Caco-2 (cell line): ENCODE measurements at regions of chr2 and their contacts with region 1.

Region 1: GRCh38 chr2:150487537-150488429 is at the start of gene RND3:
- DNase-seq: peak; percentile 97 to 98
- H3K4me3 ChIP-seq: peak within 1 kb of the TSS; percentile 81
- H3K4me3 Mint-ChIP-seq: peak within 1 kb of the TSS; percentile 99
- H3K27ac Mint-ChIP-seq: peak within 1 kb of the TSS; percentile 93
- H3K4me1 ChIP-seq: peaks cover 22% of the 10 kb centered on the region
- H3K4me1 Mint-ChIP-seq: peaks cover 12% of the 10 kb centered on the region
- H3K27me3 ChIP-seq: no peaks in the 10 kb centered on the region
- H3K27me3 Mint-ChIP-seq: no peaks in the 10 kb centered on the region
- CTCF ChIP-seq: peak; percentile 83 to 85
- total RNA-seq, gene RND3: 70.9 and 75.0 TPM in 2 replicates

Region 2: GRCh38 chr2:149733936-149734685 is 753.7 kb before region 1 on chr2:
- CTCF ChIA-PET with region 1: no interaction called
- POLR2A ChIA-PET with region 1: no interaction called
- intact Hi-C with region 1: loop called (anchors 5 kb)
- DNase-seq: peak; percentile 75 to 78
- H3K4me3 ChIP-seq: no peak overlapping the region
- H3K4me3 Mint-ChIP-seq: no peak overlapping the region
- H3K27ac Mint-ChIP-seq: peak overlapping the region; percentile 25
- H3K4me1 ChIP-seq: peaks cover 36% of the 10 kb centered on the region
- H3K4me1 Mint-ChIP-seq: peaks cover 13% of the 10 kb centered on the region
- H3K27me3 ChIP-seq: no peaks in the 10 kb centered on the region
- H3K27me3 Mint-ChIP-seq: no peaks in the 10 kb centered on the region
- CTCF ChIP-seq: no peak

Region 3: DNA sequence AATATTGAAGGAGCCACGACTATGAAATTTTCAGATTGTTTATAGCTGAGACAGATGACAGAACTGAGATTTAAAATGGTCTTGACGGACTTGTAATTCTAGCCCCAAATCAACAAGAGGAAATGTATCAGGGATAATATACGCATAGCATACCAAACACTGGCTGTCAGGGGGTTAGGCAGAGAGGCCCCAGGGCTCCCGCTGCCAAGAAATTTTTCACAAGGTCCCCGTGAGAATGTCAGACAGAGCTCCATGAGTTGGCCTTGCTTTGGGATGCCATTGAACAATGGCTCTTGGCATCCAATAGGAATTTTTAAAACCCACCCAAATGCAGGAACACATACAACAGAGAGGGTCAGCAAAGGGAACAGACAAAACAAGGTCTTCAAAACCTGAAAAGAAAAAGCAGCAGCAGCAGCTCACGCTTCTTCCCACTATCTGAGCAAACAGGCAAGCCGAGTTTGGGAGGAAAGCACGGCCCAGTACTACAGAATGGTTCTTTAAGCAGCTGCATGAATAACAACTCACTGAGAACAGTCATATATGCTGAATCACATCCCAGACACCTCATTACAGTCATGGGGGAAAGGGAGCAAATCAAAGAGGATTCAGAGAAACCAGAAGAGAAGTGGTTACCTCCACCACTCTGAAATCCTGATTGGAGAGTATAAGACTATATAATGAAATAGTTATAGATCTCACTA is 445.9 kb before region 1 on chr2:
- CTCF ChIA-PET with region 1: no interaction called
- POLR2A ChIA-PET with region 1: no interaction called
- intact Hi-C with region 1: loop called (anchors 1 kb)
- DNase-seq: no peak
- H3K4me3 ChIP-seq: no peak overlapping the region
- H3K4me3 Mint-ChIP-seq: no peak overlapping the region
- H3K27ac Mint-ChIP-seq: no peak overlapping the region
- H3K4me1 ChIP-seq: peaks cover 27% of the 10 kb centered on the region
- H3K4me1 Mint-ChIP-seq: peaks cover 35% of the 10 kb centered on the region
- H3K27me3 ChIP-seq: no peaks in the 10 kb centered on the region
- H3K27me3 Mint-ChIP-seq: no peaks in the 10 kb centered on the region
- CTCF ChIP-seq: no peak

Region 4: DNA sequence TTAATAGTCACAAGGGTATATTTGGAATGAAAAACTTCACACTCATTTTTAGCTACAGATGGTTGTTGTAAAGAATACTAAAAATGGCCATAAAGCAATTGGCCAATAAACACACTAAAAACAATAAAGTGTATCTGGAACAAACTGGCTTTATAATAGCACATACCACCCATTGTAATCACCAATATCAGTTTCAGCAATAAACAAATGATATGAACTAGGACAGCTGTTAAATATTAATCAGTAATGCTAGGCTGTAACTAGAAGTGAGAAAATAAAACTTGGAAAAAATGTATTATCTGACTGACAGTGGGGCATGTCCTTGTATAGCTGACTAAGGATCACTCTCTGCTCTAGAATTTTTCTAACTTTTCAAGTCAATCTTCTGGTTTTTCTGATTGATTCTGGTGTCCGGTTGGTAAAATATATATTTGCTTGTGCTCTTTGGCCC is 312.8 kb before region 1 on chr2:
- CTCF ChIA-PET with region 1: no interaction called
- POLR2A ChIA-PET with region 1: no interaction called
- intact Hi-C with region 1: loop called (anchors 5 kb)
- DNase-seq: no peak
- H3K4me3 ChIP-seq: no peak overlapping the region
- H3K4me3 Mint-ChIP-seq: no peak overlapping the region
- H3K27ac Mint-ChIP-seq: no peak overlapping the region
- H3K4me1 ChIP-seq: peaks cover 22% of the 10 kb centered on the region
- H3K4me1 Mint-ChIP-seq: peaks cover 26% of the 10 kb centered on the region
- H3K27me3 ChIP-seq: no peaks in the 10 kb centered on the region
- H3K27me3 Mint-ChIP-seq: no peaks in the 10 kb centered on the region
- CTCF ChIP-seq: no peak

Region 5: GRCh38 chr2:150371044-150371812 is 116.6 kb before region 1 on chr2:
- CTCF ChIA-PET with region 1: interaction called, 3 read pairs
- POLR2A ChIA-PET with region 1: no interaction called
- intact Hi-C with region 1: loop called (anchors 2 kb)
- DNase-seq: peak; percentile 80 to 90
- H3K4me3 ChIP-seq: no peak overlapping the region
- H3K4me3 Mint-ChIP-seq: peak overlapping the region; percentile 19
- H3K27ac Mint-ChIP-seq: peak overlapping the region; percentile 90
- H3K4me1 ChIP-seq: peaks cover 38% of the 10 kb centered on the region
- H3K4me1 Mint-ChIP-seq: peaks cover 23% of the 10 kb centered on the region
- H3K27me3 ChIP-seq: no peaks in the 10 kb centered on the region
- H3K27me3 Mint-ChIP-seq: no peaks in the 10 kb centered on the region
- CTCF ChIP-seq: no peak

Region 6: GRCh38 chr2:150391779-150392178 is 96.0 kb before region 1 on chr2:
- CTCF ChIA-PET with region 1: no interaction called
- POLR2A ChIA-PET with region 1: no interaction called
- intact Hi-C with region 1: no loop called
- DNase-seq: no peak
- H3K4me3 ChIP-seq: no peak overlapping the region
- H3K4me3 Mint-ChIP-seq: no peak overlapping the region
- H3K27ac Mint-ChIP-seq: no peak overlapping the region
- H3K4me1 ChIP-seq: 0 out of 2 replicates have a peak, but pooled peaks cover 4% of the 10 kb centered on the region
- H3K4me1 Mint-ChIP-seq: peaks cover 7% of the 10 kb centered on the region
- H3K27me3 ChIP-seq: no peaks in the 10 kb centered on the region
- H3K27me3 Mint-ChIP-seq: no peaks in the 10 kb centered on the region
- CTCF ChIP-seq: no peak